B cell (primary cell): ENCODE measurements at regions of chr3 and their contacts with region 1.

Region 1: DNA sequence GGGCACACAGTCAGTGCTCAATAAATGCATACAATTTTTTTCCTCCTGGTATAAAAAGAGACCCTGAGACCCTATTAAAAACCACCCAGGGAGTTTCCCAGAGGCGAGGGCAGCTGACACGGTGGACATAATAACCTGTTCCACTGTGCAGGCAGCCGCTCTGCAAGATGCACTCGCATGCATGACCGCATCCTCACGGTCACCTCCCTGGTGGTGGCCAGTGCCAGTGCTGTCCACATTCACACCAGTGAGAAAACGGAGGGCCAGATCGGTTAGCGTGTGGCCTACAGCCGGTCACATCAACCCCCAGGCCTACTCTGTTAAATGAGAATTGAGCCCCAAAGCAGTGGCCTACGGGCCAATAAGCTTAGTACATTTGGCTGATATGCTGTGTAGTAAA is 24.8 kb downstream of the SH3BP5 start:
- DNase-seq: no peak
- ATAC-seq: no peak
- H3K4me3 ChIP-seq: no peak overlapping the region
- H3K4me3 Mint-ChIP-seq: no peak overlapping the region
- H3K27ac ChIP-seq: peak overlapping the region in 1 of 2 donors; percentile 59
- H3K27ac Mint-ChIP-seq: peak overlapping the region; percentile 50
- H3K4me1 ChIP-seq: peaks cover 68 to 82% of the 10 kb centered on the region in 2 donors
- H3K4me1 Mint-ChIP-seq: peaks cover 84% of the 10 kb centered on the region
- H3K27me3 ChIP-seq: no peaks in the 10 kb centered on the region
- H3K27me3 Mint-ChIP-seq: no peaks in the 10 kb centered on the region
- CTCF ChIP-seq: no peak

Region 2: DNA sequence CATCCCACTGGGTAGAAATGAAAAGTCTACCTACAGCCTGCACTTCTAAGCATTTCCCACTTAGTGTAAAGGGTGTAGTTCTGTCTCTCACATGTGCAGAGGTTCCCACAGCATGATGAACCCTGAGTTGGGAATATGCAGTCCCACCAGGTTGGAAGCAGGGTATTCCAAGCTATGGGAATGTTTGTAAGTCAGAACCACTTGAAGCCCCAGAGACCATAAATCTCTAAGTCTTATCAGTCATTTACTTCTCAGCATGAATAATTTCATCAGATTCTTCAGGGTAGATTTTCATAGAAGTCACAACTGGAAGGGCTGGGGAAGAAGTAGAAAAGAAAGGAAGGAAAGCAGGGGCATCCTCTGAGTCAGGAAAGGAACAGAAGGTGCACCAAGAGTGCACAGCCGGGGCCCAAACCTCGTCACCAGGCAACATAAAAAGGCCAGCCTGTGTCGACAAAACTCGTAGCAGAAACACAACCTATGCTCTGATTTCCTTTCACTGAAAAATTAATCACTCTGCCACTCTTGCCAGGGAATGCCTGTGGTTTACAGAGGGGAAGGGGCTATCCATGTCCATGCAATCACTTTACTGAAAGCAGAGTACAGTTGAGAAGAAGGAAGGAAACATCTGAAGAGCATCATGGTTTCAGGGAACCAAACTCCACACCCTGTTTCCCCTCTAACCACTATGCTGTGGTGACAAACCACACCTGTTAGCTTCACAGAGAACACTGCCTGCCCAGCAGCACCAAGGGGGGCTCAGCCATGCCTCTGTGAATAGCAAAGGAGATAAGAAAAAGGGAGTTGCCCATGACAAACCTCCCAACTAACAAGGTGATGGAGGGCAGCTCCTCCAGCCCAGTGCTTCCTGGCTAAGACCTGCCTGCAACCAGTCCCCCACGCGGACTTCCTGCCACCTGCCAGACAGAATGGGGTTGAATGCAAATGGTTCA is 15.7 kb before region 1 on chr3:
- CTCF ChIA-PET with region 1: interaction called, 6 read pairs
- POLR2A ChIA-PET with region 1: interaction called, 4 read pairs
- intact Hi-C with region 1: loop called (anchors 2 kb)
- DNase-seq: peak; percentile 87
- ATAC-seq: peak; percentile 80
- H3K4me3 ChIP-seq: peak overlapping the region in 3 of 5 experiments; percentile 5 to 30 (median 27)
- H3K4me3 Mint-ChIP-seq: peak overlapping the region; percentile 83
- H3K27ac ChIP-seq: peak overlapping the region; percentile 58 to 87
- H3K27ac Mint-ChIP-seq: peak overlapping the region; percentile 97
- H3K4me1 ChIP-seq: peaks cover 96 to 99% of the 10 kb centered on the region in 2 donors
- H3K4me1 Mint-ChIP-seq: peaks cover 89% of the 10 kb centered on the region
- H3K27me3 ChIP-seq: no peaks in the 10 kb centered on the region
- H3K27me3 Mint-ChIP-seq: no peaks in the 10 kb centered on the region
- CTCF ChIP-seq: no peak